ENCODE measurements at regions of chr12 and their contacts with region 1.

Region 1: DNA sequence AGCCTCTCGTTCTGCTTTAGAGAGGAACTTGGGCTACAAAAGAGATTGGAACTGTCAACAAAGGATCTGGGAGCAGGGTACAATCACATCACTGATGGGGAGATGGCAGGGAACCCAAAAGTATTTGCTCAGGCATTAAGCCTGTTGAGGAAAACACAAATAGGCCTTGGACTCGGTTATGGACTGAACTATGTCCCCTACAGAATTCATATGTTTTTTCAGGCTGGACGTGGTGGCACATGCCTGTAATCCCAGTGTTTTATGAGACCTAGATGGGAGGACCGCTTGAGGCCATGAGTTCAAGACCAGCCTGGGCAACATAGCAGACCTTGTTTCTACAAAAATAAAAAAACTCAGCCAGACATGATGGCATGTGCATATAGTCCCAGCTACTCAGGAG is 13.9 kb downstream of the DDX23 start:
- DNase-seq: no peak
- H3K4me3 ChIP-seq: no peak overlapping the region
- CTCF ChIP-seq: no peak

Region 2: GRCh38 chr12:48800457-48800856 is 37.6 kb before region 1 on chr12:
- in situ Hi-C with region 1: no loop called
- DNase-seq: no peak
- H3K4me3 ChIP-seq: no peak overlapping the region
- CTCF ChIP-seq: no peak

Region 3: DNA sequence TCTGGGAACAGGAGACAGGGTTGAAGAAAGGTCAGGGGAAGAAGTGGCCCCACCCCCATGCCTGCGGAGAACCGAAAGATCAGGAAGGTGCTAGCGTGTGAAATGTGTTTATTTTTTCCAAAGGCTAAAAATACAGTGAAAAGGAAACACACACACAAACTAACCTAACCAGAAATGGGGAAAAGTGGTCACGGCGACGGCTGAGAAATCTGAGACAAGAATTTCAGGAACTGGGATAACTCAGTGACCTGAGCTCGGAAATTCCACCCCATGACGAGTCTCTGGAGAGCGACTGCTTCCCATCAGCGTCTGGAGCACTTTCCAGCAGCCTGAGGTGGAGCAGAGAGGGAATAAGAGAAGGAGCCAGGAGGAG is 44.3 kb after region 1 on chr12:
- in situ Hi-C with region 1: loop called (anchors 5 kb)
- DNase-seq: no peak
- H3K4me3 ChIP-seq: no peak overlapping the region
- CTCF ChIP-seq: no peak

Measured in astrocyte of the cerebellum (primary cell).